AG04449 (cell line): ENCODE measurements at regions of chr17 and their contacts with region 1.

Region 1: GRCh38 chr17:41738077-41738735 is 3.8 kb upstream of the HAP1 start:
- DNase-seq: no peak
- H3K4me3 ChIP-seq: no peak overlapping the region
- CTCF ChIP-seq: peak; percentile 93

Region 2: DNA sequence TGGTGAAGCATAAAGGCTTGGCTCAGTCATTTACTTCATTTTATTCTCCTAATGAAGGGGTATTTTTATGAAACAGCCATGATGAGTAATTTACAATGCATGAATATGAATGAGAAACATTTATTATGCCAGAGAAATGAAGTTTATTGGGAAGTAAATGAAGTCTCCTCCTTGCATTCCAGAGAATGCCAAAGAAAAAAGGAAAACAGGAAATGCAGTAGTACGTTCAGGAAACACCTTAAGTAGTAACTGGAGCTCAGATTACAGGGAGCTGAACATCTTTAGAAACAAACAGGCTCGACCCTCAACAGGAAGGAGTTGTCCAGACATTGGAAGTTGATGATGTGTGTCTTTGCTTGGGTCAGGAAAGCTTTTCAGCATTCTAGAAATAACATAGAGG is 360.7 kb before region 1 on chr17:
- CTCF ChIA-PET with region 1: no interaction called
- POLR2A ChIA-PET with region 1: no interaction called
- DNase-seq: no peak
- H3K4me3 ChIP-seq: no peak overlapping the region
- CTCF ChIP-seq: no peak

Region 3: DNA sequence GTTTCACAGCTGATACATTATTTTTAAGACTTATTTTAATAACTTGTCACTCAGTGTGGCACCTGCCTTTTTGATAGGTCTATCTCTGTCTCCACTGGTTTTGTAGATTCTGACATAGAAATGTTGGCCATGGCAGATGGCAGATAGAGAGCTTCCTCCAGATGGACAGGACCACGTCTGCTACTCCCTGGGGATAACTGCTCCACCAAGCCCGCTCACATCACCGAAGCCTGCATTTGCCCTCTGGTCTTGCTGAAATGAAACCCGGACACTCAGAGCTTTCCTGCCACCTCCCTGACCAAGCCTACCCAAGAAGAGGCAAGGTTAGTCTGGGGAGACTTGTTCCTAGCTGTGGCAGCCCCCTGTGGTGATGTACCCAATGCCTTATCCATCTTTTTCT is 12.7 kb after region 1 on chr17:
- CTCF ChIA-PET with region 1: interaction called, 22 read pairs
- POLR2A ChIA-PET with region 1: interaction called, 3 read pairs
- DNase-seq: no peak
- H3K4me3 ChIP-seq: no peak overlapping the region
- CTCF ChIP-seq: no peak

Region 4: DNA sequence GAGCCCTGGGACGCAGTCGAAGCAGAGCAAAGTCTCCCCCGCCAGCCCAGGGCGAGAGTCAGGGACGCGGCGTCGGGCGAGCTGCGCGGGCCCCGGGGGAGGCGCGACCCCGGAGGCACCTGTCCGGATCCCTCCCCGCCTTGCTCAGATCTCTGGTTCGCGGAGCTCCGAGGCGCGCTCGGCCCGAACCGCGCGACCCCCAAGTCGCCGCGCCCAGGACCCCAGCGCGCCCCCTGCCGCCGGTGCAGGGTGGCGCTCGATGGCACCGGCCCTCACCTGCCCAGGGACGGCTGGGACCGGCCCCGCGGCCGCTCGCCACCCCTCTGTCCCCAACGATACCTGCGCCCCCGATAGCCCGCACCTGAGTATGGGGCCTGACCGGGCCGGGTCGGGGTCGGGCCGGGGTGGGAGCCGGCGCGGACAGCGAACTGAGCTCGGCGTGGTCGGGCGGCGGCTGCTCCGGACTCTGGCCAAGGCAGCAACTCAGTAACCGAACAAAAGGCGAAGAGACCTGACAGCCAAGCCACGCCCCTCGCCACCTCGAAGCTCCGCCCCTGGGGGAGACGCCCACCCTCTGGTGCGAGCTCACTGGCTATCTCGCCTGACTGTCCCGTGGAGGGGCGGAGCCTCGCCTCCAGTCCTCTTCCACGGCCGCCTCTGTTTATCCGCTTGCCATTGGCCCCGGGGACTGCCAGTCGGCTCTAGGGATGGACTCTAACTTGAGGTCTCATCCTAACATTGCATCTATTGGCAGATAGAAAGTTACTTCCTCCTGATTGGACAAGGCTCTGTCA is 48.2 kb after region 1 on chr17 and contains the start of gene JUP:
- CTCF ChIA-PET with region 1: interaction called, 11 read pairs
- POLR2A ChIA-PET with region 1: interaction called, 4 read pairs
- DNase-seq: peak; percentile 89
- H3K4me3 ChIP-seq: peak within 1 kb of the TSS; percentile 61
- CTCF ChIP-seq: peak; percentile 37

Region 5: DNA sequence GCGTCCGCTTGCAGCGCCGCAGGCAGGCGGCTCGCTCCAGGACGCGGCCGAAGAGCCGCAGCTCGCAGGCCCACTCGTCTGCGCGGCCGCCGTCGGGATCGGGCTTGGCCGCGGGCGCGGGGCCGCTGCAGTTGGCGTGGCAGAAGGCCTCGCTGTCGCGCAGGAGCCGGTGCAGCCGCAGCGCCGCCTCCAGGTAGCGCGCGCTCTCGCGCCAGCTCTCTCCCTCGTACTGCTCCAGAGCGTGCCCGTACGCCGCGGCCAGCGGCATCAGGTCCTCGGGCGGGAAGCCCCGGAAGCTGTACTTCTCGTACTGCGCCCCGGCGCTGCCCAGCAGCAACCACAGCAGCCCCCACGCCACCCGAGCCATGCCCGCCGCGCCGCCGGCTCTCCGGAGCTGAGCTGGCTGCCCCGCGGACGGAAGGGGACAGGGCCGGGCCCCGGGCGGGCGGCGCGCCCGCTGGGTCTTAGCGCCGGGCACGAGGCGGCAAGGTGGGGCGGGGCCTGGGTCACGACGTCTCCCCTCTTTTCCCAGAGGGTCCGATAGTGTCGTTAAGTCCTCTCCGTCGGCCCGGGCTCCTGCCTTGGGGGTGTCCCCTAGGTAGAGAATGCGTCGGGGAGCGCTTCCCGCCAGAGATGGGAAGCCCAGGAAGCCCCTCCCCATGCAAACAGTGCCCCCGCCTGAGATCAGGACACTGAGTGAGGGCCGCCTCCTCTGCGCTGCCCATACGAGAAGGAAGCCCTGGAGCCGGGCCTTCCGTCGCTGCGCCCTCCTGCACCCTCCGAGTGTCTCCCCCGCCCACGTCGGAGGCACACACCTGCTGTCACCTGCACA is 73.6 kb after region 1 on chr17 and contains the start of gene P3H4:
- CTCF ChIA-PET with region 1: interaction called, 21 read pairs
- POLR2A ChIA-PET with region 1: no interaction called
- DNase-seq: no peak
- H3K4me3 ChIP-seq: peak within 1 kb of the TSS; percentile 87
- CTCF ChIP-seq: peak; percentile 78

Region 6: GRCh38 chr17:41864836-41865595 is 126.8 kb after region 1 on chr17 and contains the start of gene KLHL11:
- CTCF ChIA-PET with region 1: interaction called, 11 read pairs
- POLR2A ChIA-PET with region 1: no interaction called
- DNase-seq: peak; percentile 17
- H3K4me3 ChIP-seq: peak within 1 kb of the TSS; percentile 93
- CTCF ChIP-seq: no peak

Region 7: GRCh38 chr17:41959336-41960095 is 221.3 kb after region 1 on chr17:
- CTCF ChIA-PET with region 1: interaction called, 10 read pairs
- POLR2A ChIA-PET with region 1: no interaction called
- DNase-seq: no peak
- H3K4me3 ChIP-seq: no peak overlapping the region
- CTCF ChIP-seq: peak; percentile 45

Region 8: GRCh38 chr17:42472709-42473521 is 734.7 kb after region 1 on chr17:
- CTCF ChIA-PET with region 1: no interaction called
- POLR2A ChIA-PET with region 1: no interaction called
- DNase-seq: peak; percentile 71
- H3K4me3 ChIP-seq: no peak overlapping the region
- CTCF ChIP-seq: no peak